Activated naive CD4-positive, alpha-beta T cell treated with anti-CD3 and anti-CD28 coated beads for 36 hours (primary cell): ENCODE measurements at regions of chr1 and their contacts with region 1.

Region 1: DNA sequence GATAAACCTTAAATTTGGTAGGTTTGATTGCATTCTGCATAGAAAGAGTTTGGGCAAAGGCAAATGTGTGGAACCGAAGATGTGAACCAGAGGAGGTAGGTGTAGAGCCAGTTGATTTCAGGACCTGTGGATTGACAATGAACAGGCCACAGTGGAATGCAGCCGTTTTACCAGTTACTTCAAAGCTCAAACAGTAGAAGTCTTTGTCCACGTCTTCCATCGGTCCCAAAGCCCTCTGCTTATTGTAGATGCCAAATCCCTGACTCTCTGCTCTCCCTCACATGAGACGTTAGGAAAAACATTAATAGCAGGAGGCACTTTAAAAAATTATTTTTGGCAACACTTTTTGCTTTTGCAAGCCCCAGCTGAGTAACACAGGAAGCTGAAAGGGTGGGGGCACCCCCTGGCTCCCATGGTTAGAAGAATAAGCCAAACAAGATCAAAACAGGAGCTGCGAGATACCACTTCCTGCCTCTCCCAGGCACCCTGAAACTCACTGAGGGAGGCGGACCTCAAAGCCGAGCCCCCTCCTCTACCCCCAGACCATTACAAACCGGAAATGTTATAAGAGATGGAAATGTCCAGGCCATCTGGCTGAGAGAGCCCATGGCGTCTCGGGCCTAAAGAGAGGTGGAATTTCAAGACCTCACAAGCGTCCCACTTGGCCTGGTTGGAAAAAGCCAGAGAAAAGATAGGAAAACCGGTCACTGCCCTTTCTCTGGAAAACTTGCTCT is 13.5 kb downstream of the TRAF3IP3 start:
- DNase-seq: peak; percentile 92
- H3K4me3 Mint-ChIP-seq: no peak overlapping the region
- H3K27ac Mint-ChIP-seq: no peak overlapping the region
- H3K4me1 Mint-ChIP-seq: peaks cover 10% of the 10 kb centered on the region
- H3K27me3 Mint-ChIP-seq: no peaks in the 10 kb centered on the region

Region 2: GRCh38 chr1:209585672-209586071 is 183.7 kb before region 1 on chr1:
- CTCF ChIA-PET with region 1: no interaction called
- intact Hi-C with region 1: no loop called
- DNase-seq: peak; percentile 30
- H3K4me3 Mint-ChIP-seq: no peak overlapping the region
- H3K27ac Mint-ChIP-seq: no peak overlapping the region
- H3K4me1 Mint-ChIP-seq: no peaks in the 10 kb centered on the region
- H3K27me3 Mint-ChIP-seq: peaks cover 8% of the 10 kb centered on the region

Region 3: DNA sequence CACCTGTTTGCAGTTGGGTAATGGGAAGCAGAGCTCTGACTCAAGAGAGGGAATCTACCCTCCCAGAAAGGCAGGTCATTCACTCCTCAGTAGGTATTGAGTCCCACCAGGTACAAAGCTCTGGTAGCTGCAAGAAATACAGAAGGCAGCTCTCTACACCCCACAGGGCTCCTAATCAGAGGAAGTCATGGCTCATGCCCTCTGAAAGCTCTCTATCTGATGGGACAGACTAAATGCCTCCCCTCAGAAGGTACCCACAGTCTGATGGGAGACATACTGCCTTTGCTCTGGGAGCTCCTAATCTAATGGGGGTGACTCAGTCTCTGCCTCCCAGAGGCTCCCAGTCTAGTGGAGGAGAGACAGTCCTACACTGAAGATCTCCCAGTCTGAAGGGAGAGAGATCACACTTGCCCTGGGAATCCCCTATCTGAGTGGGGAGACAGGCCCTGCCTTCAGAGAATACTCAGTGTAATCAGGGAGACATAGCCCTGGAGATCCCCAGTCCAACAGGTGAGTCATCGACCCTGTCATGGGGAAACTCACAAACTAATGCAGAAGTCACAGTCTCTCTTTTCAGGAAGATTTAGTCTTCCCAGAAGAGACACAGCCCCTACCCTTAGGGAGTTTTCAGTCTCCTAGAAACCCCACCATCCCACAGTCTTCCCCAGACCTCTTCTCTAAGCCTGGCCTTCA is 162.1 kb before region 1 on chr1:
- CTCF ChIA-PET with region 1: no interaction called
- intact Hi-C with region 1: loop called (anchors 1 kb)
- DNase-seq: peak; percentile 88
- H3K4me3 Mint-ChIP-seq: peak overlapping the region; percentile 51
- H3K27ac Mint-ChIP-seq: peak overlapping the region; percentile 86
- H3K4me1 Mint-ChIP-seq: peaks cover 11% of the 10 kb centered on the region
- H3K27me3 Mint-ChIP-seq: no peaks in the 10 kb centered on the region

Region 4: DNA sequence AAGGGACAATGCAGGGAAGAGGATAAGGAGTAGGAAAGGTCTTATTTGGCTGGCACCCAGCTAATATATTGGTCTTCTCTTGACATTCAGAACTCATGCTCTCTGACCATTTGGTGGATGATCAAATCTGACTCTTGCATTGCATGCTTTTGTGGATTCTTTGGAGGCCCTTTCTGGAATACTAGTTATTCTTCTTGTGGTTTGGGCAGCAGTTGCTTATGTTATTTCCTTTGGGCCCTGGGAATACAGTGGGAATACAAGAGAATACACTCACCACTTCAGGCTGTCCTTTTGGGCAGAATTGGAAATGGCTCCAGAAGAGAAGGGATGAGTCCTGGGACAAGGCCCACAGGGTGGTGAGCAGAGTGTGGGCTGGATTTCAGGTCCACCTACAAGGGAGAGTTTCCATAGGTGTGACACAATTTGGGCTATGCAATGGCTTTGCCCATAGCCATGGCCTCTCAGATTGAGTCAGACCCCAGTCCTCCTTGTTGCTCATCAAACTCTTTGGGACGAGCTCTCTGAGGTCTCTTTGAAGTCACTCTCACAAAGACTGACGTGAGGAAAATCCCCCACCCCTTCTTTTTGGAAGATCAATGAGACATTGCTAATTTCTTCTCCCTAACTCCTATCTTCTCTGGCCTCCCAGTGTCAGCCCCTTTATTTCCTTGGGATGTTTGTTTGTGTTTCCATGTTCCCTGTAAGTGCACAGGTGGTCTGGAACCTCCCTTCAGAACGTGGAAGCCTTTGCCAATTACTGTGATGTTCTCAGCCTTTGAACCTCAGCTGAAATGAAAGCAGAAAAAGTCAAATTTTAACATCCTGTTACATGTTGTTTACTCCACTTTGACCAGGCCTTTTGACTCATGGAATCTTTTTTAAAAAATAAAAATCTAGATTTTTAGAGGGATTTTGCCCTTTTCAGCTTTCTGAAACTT is 45.3 kb before region 1 on chr1:
- CTCF ChIA-PET with region 1: interaction called, 6 read pairs
- intact Hi-C with region 1: loop called (anchors 1 kb)
- DNase-seq: peak; percentile 80
- H3K4me3 Mint-ChIP-seq: peak overlapping the region; percentile 49
- H3K27ac Mint-ChIP-seq: peak overlapping the region; percentile 99
- H3K4me1 Mint-ChIP-seq: peaks cover 70% of the 10 kb centered on the region
- H3K27me3 Mint-ChIP-seq: no peaks in the 10 kb centered on the region

Region 5: DNA sequence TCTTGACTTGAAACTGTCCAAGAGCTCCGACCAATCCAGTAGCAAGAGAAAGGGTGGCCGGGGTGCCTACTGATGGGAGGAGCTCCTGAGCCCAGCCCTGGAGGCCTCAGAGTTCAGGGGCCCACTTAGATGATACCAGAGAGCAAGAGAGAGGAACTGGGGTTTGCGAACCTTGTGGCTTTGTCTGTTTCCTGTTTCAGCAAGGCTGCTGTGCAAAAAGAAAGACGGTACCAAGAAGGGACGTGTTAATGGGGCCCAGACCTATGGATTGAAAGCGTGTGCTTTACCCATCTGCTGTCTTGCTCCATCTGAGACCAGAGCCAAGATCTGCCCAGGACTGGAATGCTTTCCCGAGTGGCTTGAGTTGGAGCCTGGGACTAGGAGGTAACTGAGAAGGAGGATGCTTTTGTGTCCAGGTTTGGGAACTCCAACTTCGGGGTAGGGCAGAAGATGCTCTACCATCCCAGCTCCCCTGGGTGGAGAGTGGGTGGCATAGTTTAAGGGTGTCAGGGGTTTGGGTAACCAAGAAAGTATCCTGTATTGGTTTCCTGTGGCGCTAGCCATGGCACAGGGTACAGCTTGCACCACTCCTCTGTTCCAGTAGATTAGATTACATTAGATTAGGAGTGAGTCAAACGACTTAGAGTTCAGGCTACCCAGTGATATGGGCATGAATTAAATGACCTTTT is 13.3 kb before region 1 on chr1 and contains the start of gene TRAF3IP3:
- CTCF ChIA-PET with region 1: interaction called, 77 read pairs
- intact Hi-C with region 1: loop called (anchors 1 kb)
- DNase-seq: peak; percentile 90
- H3K4me3 Mint-ChIP-seq: peak within 1 kb of the TSS; percentile 92
- H3K27ac Mint-ChIP-seq: peak within 1 kb of the TSS; percentile 98
- H3K4me1 Mint-ChIP-seq: peaks cover 75% of the 10 kb centered on the region
- H3K27me3 Mint-ChIP-seq: no peaks in the 10 kb centered on the region
- total RNA-seq, gene TRAF3IP3: 107 to 113 TPM

Region 6: DNA sequence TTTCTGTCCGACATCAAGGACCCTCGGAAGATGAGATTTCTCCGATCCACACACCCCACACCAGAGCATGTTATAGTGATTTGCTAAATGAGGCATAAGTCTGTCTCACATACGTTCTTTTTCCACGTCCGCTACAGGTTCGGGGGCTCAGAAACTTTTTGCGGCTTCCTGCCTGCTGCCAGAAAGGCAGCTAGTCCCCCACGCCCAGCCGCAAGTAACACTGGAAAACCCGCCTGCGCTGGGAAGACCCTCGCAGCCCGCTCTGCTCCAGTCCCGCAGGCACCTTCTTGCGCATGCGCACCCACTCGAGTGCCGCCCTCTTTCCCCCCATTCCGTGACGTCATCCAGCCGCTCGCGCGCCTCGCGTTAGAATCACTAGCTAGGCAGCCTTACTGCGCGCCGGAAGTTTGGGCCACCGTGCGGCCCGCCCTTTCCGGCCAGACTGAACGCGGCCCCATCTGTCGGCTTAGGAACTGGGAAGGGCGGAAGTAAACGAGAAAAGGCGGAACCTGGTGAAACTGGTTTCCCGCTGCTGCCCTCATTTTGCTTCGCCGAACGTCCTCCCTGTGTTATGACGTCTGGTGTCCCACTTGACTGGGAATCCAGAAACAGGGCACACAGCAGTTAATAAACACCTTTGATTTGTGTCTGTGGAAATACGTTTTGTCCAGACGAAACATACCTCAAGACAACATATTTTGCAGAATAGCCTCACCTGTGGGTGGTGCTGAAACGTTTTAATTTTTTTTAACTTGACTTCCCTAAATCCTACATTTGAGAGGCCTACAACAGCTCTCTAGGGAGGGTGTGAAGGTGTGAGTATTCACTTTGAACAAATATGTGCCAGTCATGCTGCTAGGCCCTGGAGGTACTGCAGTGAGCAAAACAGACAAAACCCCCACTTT is 15.2 kb after region 1 on chr1 and contains the start of gene C1orf74:
- CTCF ChIA-PET with region 1: interaction called, 9 read pairs
- intact Hi-C with region 1: loop called (anchors 1 kb)
- DNase-seq: peak; percentile 100
- H3K4me3 Mint-ChIP-seq: peak within 1 kb of the TSS; percentile 92
- H3K27ac Mint-ChIP-seq: peak within 1 kb of the TSS; percentile 97
- H3K4me1 Mint-ChIP-seq: peaks cover 37% of the 10 kb centered on the region
- H3K27me3 Mint-ChIP-seq: no peaks in the 10 kb centered on the region
- total RNA-seq, gene C1orf74: 3.5 to 4.6 TPM

Region 7: DNA sequence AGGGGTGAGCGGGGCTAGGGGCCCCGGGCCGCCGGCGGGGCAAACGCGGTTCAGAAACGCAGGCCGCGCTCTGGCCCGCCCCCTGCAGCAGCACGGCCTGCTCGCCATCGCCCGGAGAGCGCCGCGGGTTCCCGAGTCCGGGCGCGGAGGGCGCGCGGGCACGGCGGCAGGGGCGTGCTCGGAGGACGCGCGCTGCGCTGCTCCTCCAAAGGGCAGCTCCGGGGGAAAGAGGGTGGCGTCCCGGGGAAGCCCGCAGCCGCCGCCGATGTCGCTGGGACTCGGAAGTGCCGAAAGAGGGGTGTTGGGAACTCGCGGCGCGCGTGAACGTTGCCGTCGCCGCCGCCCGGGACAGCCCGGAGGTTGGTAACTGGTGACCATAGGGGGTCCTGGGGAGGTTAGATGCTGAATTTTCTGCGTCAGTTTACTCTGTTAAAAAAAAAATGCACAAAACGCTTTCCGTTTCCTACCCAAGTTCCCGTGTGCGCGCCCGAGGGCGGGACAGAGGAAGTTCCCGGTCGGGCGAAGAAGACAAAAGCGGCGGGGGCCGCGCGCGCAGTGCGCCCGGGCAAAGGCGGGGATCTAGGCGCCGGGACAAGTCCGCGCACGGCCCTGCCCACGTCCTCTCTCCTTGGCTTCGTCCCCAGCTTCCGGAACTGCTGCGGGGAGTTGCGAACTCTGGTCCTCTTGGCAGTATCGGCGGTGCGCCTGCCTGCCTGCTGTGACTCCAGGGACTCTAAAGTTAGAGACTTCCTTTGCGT is 559.6 kb after region 1 on chr1 and contains the start of gene HHAT:
- CTCF ChIA-PET with region 1: no interaction called
- intact Hi-C with region 1: loop called (anchors 1 kb)
- DNase-seq: peak; percentile 84
- H3K4me3 Mint-ChIP-seq: peak within 1 kb of the TSS; percentile 93
- H3K27ac Mint-ChIP-seq: peak within 1 kb of the TSS; percentile 95
- H3K4me1 Mint-ChIP-seq: peaks cover 41% of the 10 kb centered on the region
- H3K27me3 Mint-ChIP-seq: peaks cover 4% of the 10 kb centered on the region
- total RNA-seq, gene HHAT: 3.6 to 3.9 TPM